MCF 10A (cell line): ENCODE measurements at regions of chr12 and their contacts with region 1.

Region 1: GRCh38 chr12:98998697-98999299 is 353.7 kb downstream of the APAF1 start:
- DNase-seq: peak; percentile 54
- H3K4me3 Mint-ChIP-seq: no peak overlapping the region
- H3K27ac Mint-ChIP-seq: no peak overlapping the region
- H3K4me1 Mint-ChIP-seq: no peaks in the 10 kb centered on the region
- H3K27me3 Mint-ChIP-seq: no peaks in the 10 kb centered on the region
- CTCF ChIP-seq: peak; percentile 55

Region 2: GRCh38 chr12:98418357-98419075 is 580.3 kb before region 1 on chr12:
- CTCF ChIA-PET with region 1: no interaction called
- POLR2A ChIA-PET with region 1: no interaction called
- intact Hi-C with region 1: loop called (anchors 1 kb)
- DNase-seq: peak; percentile 95
- H3K4me3 Mint-ChIP-seq: peak overlapping the region; percentile 51
- H3K27ac Mint-ChIP-seq: peak overlapping the region; percentile 79
- H3K4me1 Mint-ChIP-seq: peaks cover 33% of the 10 kb centered on the region
- H3K27me3 Mint-ChIP-seq: no peaks in the 10 kb centered on the region
- CTCF ChIP-seq: no peak

Region 3: DNA sequence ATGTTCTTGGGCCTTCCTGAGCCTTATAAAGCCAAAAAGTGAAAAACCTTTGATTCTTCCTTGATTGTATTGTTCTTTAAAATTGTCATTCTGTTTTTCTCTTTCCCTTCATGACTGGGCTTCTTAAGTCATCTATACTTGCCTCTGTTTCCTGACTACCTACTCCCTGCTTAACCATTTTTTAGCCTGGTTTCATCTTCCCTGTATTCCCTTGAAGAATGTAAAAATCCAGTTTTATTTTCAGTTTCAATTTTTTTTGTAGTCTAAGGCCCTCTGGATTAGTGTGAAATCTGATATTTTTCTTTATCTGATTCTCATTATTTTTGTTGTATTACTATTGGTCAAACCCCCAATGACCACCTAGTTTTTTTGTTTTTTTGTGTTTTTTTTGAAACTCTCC is 307.4 kb before region 1 on chr12:
- CTCF ChIA-PET with region 1: interaction called, 21 read pairs
- POLR2A ChIA-PET with region 1: no interaction called
- intact Hi-C with region 1: no loop called
- DNase-seq: no peak
- H3K4me3 Mint-ChIP-seq: no peak overlapping the region
- H3K27ac Mint-ChIP-seq: peak overlapping the region; percentile 17
- H3K4me1 Mint-ChIP-seq: no peaks in the 10 kb centered on the region
- H3K27me3 Mint-ChIP-seq: no peaks in the 10 kb centered on the region
- CTCF ChIP-seq: no peak

Region 4: DNA sequence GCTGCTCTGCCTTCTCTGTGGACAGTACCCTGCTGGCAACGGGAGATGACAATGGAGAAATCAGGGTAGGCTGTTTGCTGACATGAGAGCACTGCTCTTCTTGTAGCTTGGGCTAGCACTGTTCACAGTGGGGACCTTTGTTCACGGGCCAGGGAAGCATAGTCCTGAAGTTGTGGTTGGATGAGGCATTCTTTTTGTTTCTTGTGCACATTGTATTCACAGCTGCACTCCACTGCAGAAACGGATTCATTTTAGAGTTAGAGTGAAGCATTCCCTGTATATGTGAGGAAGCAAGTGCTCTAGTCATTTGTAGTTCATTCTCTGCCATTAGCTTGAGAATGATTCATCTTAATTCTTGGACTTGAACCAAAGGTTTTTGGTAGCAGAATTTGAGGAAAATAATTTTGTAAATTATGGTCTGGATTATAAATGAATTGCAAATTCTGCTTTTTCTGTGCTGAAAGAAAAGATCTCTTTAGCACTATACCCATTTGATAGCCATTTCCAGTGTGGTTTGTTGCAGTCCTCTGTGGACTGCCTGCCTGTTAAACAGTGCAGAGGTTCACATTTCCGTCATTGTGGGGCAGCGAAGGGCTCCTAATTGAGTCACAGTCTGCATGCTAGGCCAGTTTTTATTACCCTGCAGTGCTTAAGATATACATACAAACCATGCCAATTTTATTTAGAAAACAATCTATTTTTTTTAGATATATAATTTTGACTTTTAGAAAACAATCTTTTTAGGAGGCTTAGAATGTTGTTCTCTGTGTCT is 273.1 kb before region 1 on chr12:
- CTCF ChIA-PET with region 1: interaction called, 9 read pairs
- POLR2A ChIA-PET with region 1: no interaction called
- intact Hi-C with region 1: loop called (anchors 1 kb)
- DNase-seq: peak; percentile 55
- H3K4me3 Mint-ChIP-seq: no peak overlapping the region
- H3K27ac Mint-ChIP-seq: no peak overlapping the region
- H3K4me1 Mint-ChIP-seq: no peaks in the 10 kb centered on the region
- H3K27me3 Mint-ChIP-seq: no peaks in the 10 kb centered on the region
- CTCF ChIP-seq: peak; percentile 19

Region 5: GRCh38 chr12:98955277-98955676 is 43.5 kb before region 1 on chr12:
- CTCF ChIA-PET with region 1: interaction called, 29 read pairs
- POLR2A ChIA-PET with region 1: no interaction called
- intact Hi-C with region 1: loop called (anchors 1 kb)
- DNase-seq: peak; percentile 61
- H3K4me3 Mint-ChIP-seq: no peak overlapping the region
- H3K27ac Mint-ChIP-seq: no peak overlapping the region
- H3K4me1 Mint-ChIP-seq: no peaks in the 10 kb centered on the region
- H3K27me3 Mint-ChIP-seq: no peaks in the 10 kb centered on the region
- CTCF ChIP-seq: peak; percentile 55